Activated CD8-positive, alpha-beta T cell treated with anti-CD3 and anti-CD28 coated beads, Interleukin-2, amount 10 ng/mL, durations not matched to agents 7 days and 5 days (primary cell): ENCODE measurements at regions of chr2 and their contacts with region 1.

Region 1: DNA sequence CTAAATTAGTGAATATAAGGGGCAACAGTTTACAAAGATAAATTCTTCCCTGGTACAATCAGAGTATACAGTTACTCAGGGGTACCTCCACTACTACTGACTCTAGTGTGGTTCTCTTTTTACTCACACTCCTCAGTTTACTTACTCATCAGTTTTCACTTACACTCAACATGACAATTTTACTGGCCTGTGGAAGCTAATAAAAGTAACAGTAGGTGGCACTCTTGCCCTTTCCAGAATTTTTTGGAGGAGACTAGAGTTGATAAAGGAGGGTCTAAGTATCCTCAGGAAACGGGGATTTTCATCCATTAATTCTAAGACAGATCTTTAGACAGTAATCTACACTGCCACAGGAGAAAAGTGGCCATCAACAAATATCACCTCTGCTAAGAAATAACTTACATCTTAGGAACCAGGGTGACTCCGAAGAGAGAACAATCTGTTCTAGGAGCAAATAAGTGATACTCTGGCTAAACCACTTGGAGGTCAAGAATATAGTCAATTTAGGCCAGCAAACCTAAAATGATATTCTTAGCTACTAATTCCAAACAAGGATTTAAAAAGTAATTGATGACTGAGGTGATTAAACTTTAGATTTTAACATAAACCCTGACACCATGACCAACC is 61.3 kb downstream of the ATL2 start:
- DNase-seq: peak; percentile 34
- ATAC-seq: peak; percentile 60
- H3K4me3 Mint-ChIP-seq: no peak overlapping the region
- H3K27ac Mint-ChIP-seq: no peak overlapping the region
- H3K4me1 Mint-ChIP-seq: no peaks in the 10 kb centered on the region
- H3K27me3 Mint-ChIP-seq: no peaks in the 10 kb centered on the region

Region 2: DNA sequence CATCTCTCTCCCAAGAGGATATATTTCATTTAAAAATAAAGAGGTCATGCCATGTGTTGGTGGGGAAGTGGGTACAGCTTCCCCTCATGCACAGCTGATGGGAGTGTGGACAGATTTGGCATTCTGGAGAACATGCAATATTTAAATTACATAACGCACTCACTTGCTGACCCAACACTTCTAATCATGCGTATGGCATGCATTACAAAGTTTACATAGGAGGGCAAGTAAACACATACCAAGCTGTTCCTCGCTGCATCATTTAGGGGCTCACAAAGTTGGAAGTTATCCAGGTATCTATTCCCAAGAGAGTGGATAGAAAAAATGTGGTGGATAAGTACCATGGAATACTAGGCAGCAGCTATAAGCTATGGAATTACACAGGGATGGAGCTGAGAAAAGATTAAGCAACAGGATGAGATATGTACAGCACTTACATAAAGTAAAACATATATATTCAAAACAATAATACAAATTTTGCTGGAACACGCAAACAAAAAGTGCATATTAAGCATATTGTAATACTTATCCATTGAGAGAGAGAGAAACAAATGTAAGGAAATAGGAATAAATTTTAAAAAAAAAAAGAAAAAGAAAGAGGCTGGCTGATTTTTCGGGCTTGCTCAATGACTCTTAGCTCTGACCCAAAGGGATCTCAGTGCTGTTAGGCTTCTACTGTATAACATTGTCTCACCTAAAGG is 250.9 kb before region 1 on chr2:
- CTCF ChIA-PET with region 1: no interaction called
- POLR2A ChIA-PET with region 1: no interaction called
- DNase-seq: no peak
- ATAC-seq: no peak
- H3K4me3 Mint-ChIP-seq: no peak overlapping the region
- H3K27ac Mint-ChIP-seq: no peak overlapping the region
- H3K4me1 Mint-ChIP-seq: no peaks in the 10 kb centered on the region
- H3K27me3 Mint-ChIP-seq: peaks cover 5% of the 10 kb centered on the region

Region 3: GRCh38 chr2:38201784-38202183 is 114.0 kb before region 1 on chr2:
- CTCF ChIA-PET with region 1: no interaction called
- POLR2A ChIA-PET with region 1: no interaction called
- DNase-seq: no peak
- ATAC-seq: no peak
- H3K4me3 Mint-ChIP-seq: no peak overlapping the region
- H3K27ac Mint-ChIP-seq: no peak overlapping the region
- H3K4me1 Mint-ChIP-seq: no peaks in the 10 kb centered on the region
- H3K27me3 Mint-ChIP-seq: peaks cover 52% of the 10 kb centered on the region

Region 4: DNA sequence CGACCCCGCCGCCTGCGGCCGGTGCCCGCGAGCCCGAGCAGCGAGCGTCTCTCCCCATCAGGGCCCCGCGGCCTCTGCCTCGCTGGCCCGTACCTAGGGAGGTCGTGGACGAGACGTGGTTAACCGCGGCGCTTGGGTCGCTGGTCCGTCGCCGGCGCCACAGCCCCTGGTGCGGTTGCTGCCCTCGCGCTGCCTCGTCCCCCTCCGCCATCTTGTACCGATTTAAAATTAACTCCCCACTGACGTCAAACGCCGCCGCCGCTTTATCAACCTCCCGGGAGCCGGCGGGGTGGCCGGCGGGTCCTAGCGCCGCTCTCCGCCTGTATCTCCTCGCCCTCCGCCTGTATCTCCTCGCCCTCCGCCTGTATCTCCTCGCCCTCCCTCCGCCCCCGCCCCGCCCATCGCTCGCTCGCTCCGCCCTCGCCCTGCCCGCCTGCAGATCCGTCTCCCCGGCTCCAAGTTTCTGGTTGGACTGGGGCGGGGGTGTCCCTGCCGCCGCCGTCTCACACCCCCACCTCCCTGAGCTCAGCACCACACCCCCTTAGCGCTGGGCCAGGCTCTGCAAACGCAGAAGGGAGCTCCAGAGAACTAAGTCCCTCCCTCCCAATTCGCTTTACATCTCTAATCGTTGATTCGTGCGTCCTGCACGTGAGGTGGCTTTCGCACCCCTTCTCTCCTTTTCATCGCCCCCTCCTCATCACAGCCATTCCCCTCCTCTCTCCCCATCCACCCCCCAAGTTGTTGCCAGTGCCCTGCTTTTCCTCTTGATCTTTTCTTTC is 61.4 kb after region 1 on chr2 and contains the start of gene ATL2:
- CTCF ChIA-PET with region 1: interaction called, 25 read pairs
- POLR2A ChIA-PET with region 1: interaction called, 5 read pairs
- DNase-seq: peak; percentile 97
- ATAC-seq: peak; percentile 89
- H3K4me3 Mint-ChIP-seq: peak within 1 kb of the TSS; percentile 97
- H3K27ac Mint-ChIP-seq: peak within 1 kb of the TSS; percentile 94
- H3K4me1 Mint-ChIP-seq: peaks cover 47% of the 10 kb centered on the region
- H3K27me3 Mint-ChIP-seq: no peaks in the 10 kb centered on the region
- total RNA-seq, gene ATL2: 50.5 to 58.7 TPM

Region 5: GRCh38 chr2:38465789-38466127 is 149.9 kb after region 1 on chr2:
- CTCF ChIA-PET with region 1: interaction called, 11 read pairs
- POLR2A ChIA-PET with region 1: no interaction called
- DNase-seq: peak; percentile 27
- ATAC-seq: no peak
- H3K4me3 Mint-ChIP-seq: no peak overlapping the region
- H3K27ac Mint-ChIP-seq: peak overlapping the region; percentile 29
- H3K4me1 Mint-ChIP-seq: peaks cover 3% of the 10 kb centered on the region
- H3K27me3 Mint-ChIP-seq: peaks cover 3% of the 10 kb centered on the region

Region 6: GRCh38 chr2:38515160-38516074 is 199.6 kb after region 1 on chr2:
- CTCF ChIA-PET with region 1: interaction called, 166 read pairs
- POLR2A ChIA-PET with region 1: no interaction called
- DNase-seq: no peak
- ATAC-seq: no peak
- H3K4me3 Mint-ChIP-seq: no peak overlapping the region
- H3K27ac Mint-ChIP-seq: no peak overlapping the region
- H3K4me1 Mint-ChIP-seq: no peaks in the 10 kb centered on the region
- H3K27me3 Mint-ChIP-seq: peaks cover 6% of the 10 kb centered on the region